Gastrocnemius medialis (tissue), 4 donors: ENCODE measurements at regions of chr18 and their contacts with region 1.

Region 1: DNA sequence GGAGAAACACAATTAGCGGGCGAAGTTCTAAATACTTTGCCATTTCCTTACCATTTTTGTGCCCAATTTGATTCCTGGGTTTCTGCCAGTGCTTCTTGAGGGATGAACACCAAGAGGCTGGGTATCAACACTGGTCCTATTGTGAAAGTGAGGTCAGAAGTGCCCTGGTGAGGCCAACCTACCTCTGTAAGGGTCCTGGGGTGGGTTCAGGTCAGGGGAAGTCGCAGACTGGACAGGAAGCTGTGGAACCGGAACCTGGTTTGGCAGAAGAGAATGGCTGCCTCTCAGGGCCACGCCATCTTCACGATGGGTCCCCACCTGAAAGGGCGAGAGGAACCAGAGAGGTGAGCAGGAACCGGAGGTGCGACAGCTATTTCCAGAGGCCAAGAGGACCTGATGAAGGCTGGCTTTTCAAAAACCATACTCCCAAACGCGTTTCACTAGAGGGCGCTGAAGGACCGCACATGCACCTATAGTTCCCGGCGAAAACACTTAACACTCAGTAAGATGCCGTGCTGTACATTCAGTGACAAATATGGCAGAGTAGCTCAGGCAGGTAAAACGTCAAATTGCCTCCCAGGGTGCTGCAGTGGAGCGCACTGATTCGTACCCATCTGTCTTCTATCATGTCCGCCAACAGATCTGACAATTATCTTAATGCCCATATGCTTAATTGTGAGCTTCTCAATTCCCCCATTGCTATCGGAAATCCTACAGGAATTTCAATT is 275.3 kb upstream of the CCDC68 start:
- DNase-seq: peak; percentile 53 to 71
- ATAC-seq: peak; percentile 86 to 96
- H3K4me3 ChIP-seq: no peak overlapping the region
- H3K27ac ChIP-seq: peak overlapping the region; percentile 26 to 60 (median 51)
- H3K4me1 ChIP-seq: peaks cover 4 to 13% of the 10 kb centered on the region in 2 donors
- H3K27me3 ChIP-seq: no peaks in the 10 kb centered on the region
- CTCF ChIP-seq: peak; percentile 60 to 85 (median 82)
- POLR2A ChIP-seq: no peak

Region 2: GRCh38 chr18:55322178-55322735 is 87.7 kb after region 1 on chr18:
- in situ Hi-C with region 1: loop called in 1 of 4 experiments (anchors 25 kb)
- intact Hi-C with region 1: loop called (anchors 5 kb)
- DNase-seq: peak; percentile 77 to 90
- ATAC-seq: peak; percentile 88 to 90
- H3K4me3 ChIP-seq: peak overlapping the region; percentile 57 to 82 (median 73)
- H3K27ac ChIP-seq: peak overlapping the region; percentile 93 to 95 (median 94)
- H3K4me1 ChIP-seq: peaks cover 53 to 54% of the 10 kb centered on the region in 2 donors
- H3K27me3 ChIP-seq: no peaks in the 10 kb centered on the region
- CTCF ChIP-seq: peak in 2 of 5 experiments; percentile 12 to 17
- POLR2A ChIP-seq: peak; percentile 68 to 84

Region 3: DNA sequence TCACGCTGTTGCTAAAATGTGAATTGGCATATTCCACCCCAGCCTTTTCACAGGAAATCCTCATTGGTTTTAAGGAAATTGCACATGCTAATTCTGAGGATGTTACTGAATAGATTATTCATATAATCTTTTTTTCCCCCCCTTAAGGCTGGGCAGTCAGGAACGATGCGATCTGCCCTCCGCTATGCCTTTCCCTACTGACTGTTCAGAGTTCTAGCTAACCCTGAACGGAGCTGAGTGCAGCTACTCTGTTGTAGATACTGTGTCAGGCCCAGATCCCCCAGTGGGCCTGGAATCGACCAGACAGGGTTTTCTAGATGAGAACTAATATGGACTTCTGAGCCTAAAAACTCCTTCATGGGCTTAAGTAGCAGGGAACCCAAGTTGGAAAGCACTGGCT is 161.3 kb after region 1 on chr18:
- in situ Hi-C with region 1: loop called in 3 of 4 experiments (anchors 5 to 25 kb)
- intact Hi-C with region 1: no loop called
- DNase-seq: no peak
- ATAC-seq: no peak
- H3K4me3 ChIP-seq: no peak overlapping the region
- H3K27ac ChIP-seq: peak overlapping the region in 3 of 4 donors; percentile 24 to 46 (median 29)
- H3K4me1 ChIP-seq: peaks cover 32 to 45% of the 10 kb centered on the region in 2 donors
- H3K27me3 ChIP-seq: no peaks in the 10 kb centered on the region
- CTCF ChIP-seq: no peak
- POLR2A ChIP-seq: no peak

Region 4: DNA sequence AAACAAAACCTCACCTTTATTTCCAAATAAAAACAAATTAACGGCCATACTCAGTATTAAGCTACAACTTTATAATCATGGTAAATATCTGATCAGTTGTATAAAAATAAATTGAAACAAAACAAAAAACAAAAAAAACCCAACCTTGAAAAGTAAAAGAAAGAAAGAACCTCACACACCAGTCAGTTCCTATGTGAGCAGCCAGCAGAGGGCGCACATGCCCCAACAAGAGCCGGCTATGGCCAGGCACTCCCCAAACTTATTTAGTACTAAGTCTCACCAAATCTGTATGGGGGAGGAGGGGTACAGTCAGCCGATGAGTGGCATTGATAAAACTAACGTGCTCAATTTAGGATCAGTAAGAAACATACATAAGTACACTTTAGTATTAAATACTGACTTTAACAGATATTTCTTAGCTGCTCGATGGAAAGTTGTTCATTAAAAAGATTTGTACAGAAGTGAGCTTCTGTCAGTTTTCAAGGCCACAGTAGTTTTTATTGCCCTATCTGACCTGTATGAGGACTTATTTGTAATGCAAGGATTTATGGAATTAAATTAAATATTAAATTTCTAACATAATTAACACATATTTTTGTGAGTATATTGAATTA is 180.8 kb after region 1 on chr18:
- in situ Hi-C with region 1: loop called in 1 of 4 experiments (anchors 25 kb)
- intact Hi-C with region 1: loop called (anchors 5 kb)
- DNase-seq: peak; percentile 73 to 80
- ATAC-seq: peak; percentile 77 to 81
- H3K4me3 ChIP-seq: no peak overlapping the region
- H3K27ac ChIP-seq: peak overlapping the region; percentile 11 to 92 (median 89)
- H3K4me1 ChIP-seq: peaks cover 60 to 69% of the 10 kb centered on the region in 2 donors
- H3K27me3 ChIP-seq: no peaks in the 10 kb centered on the region
- CTCF ChIP-seq: peak; percentile 77 to 95 (median 87)
- POLR2A ChIP-seq: no peak

Region 5: GRCh38 chr18:55781481-55781957 is 547.0 kb after region 1 on chr18:
- in situ Hi-C with region 1: loop called (anchors 5 to 25 kb)
- intact Hi-C with region 1: loop called (anchors 2 kb)
- DNase-seq: peak; percentile 30 to 36
- ATAC-seq: peak; percentile 58 to 66
- H3K4me3 ChIP-seq: no peak overlapping the region
- H3K27ac ChIP-seq: peak overlapping the region; percentile 74 to 80 (median 79)
- H3K4me1 ChIP-seq: peaks cover 9 to 17% of the 10 kb centered on the region in 2 donors
- H3K27me3 ChIP-seq: no peaks in the 10 kb centered on the region
- CTCF ChIP-seq: peak; percentile 47 to 76 (median 59)
- POLR2A ChIP-seq: no peak

Region 6: GRCh38 chr18:56575819-56576663 is 1341.5 kb after region 1 on chr18:
- in situ Hi-C with region 1: loop called (anchors 5 to 25 kb)
- intact Hi-C with region 1: loop called (anchors 5 kb)
- DNase-seq: no peak
- ATAC-seq: peak; percentile 64 to 67
- H3K4me3 ChIP-seq: no peak overlapping the region
- H3K27ac ChIP-seq: peak overlapping the region; percentile 51 to 71 (median 66)
- H3K4me1 ChIP-seq: peaks cover 0 to 17% of the 10 kb centered on the region in 2 donors
- H3K27me3 ChIP-seq: no peaks in the 10 kb centered on the region
- CTCF ChIP-seq: peak; percentile 57 to 79 (median 59)
- POLR2A ChIP-seq: no peak